HepG2 (cell line): ENCODE measurements at regions of chr19 and their contacts with region 1.

Region 1: DNA sequence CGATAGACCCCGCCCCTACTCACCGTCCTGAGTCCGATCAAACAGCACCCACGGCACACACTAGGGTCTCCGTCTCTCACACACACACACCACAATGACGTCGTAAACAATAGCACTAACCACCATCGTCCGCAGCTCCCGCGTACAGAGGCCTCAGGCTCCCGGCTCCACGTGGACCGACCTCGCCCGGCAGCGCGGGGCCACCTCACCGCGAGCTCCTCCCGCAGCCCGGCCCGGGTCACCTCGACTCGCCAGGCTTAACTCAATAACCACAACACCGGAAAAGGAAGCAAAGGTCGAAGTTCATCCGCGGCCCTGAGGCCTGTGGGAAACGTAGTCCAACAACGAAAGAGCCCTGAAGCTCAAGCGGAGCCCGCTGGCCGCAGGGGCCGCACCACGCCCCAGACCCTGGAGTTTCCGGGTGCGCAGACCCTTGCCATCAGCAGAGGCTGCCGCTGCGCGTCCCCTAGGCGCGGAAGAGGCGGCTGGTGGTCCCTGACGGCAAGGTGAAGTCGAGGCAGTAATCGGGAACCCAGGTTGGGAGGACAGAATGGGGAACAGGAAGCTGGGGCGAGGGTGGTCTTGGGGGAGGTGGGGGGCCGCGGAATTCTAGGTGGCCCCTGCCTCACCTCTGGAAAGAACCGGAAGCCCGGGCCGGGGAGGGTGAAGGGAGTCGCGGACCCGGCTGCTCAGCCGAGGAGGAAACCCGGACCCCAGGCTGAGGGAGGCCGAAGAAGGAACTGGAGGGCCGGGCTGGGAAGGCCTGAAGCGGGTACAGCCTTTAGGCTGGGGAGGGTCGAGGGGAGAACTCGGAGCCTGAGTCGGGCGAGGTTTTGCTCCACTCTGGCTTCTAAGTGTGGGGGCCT is at the start of gene ZNF529:
- DNase-seq: peak; percentile 95
- ATAC-seq: peak; percentile 96
- H3K4me3 ChIP-seq: peak within 1 kb of the TSS; percentile 67 to 91 (median 77)
- H3K27ac ChIP-seq: peak within 1 kb of the TSS; percentile 78
- H3K4me1 ChIP-seq: peaks cover 20% of the 10 kb centered on the region
- H3K27me3 ChIP-seq: no peaks in the 10 kb centered on the region; a peak in 1 of 5 replicates
- CTCF ChIP-seq: 0 out of 2 replicates have a peak, but pooled peaks have one; percentile 17
- EP300 ChIP-seq: no peak
- POLR2A ChIP-seq: peak; percentile 89 to 93
- RAD21 ChIP-seq: peak; percentile 50
- total RNA-seq, gene ZNF529: 9.3 and 14.2 TPM in 2 replicates

Region 2: GRCh38 chr19:36528194-36528920 is 44.9 kb before region 1 on chr19 and contains the start of gene ZNF260:
- CTCF ChIA-PET with region 1: no interaction called
- POLR2A ChIA-PET with region 1: interaction called, 41 read pairs
- in situ Hi-C with region 1: no loop called
- intact Hi-C with region 1: loop called (anchors 1 kb)
- DNase-seq: peak; percentile 95
- ATAC-seq: peak; percentile 96
- H3K4me3 ChIP-seq: peak within 1 kb of the TSS; percentile 73 to 93 (median 85)
- H3K27ac ChIP-seq: peak within 1 kb of the TSS; percentile 86
- H3K4me1 ChIP-seq: peaks cover 18% of the 10 kb centered on the region
- H3K27me3 ChIP-seq: no peaks in the 10 kb centered on the region; a peak in 1 of 5 replicates
- CTCF ChIP-seq: 0 out of 2 replicates have a peak, but pooled peaks have one; percentile 3
- EP300 ChIP-seq: no peak
- POLR2A ChIP-seq: peak; percentile 77 to 90
- RAD21 ChIP-seq: peak; percentile 25; the same call in 1 of the 2 replicates
- total RNA-seq, gene ZNF260: 10.5 and 19.9 TPM in 2 replicates

Region 3: GRCh38 chr19:36646746-36647145 is 73.5 kb after region 1 on chr19:
- CTCF ChIA-PET with region 1: no interaction called
- POLR2A ChIA-PET with region 1: no interaction called
- in situ Hi-C with region 1: no loop called
- intact Hi-C with region 1: no loop called
- DNase-seq: no peak
- ATAC-seq: no peak
- H3K4me3 ChIP-seq: no peak overlapping the region
- H3K27ac ChIP-seq: no peak overlapping the region
- H3K4me1 ChIP-seq: no peaks in the 10 kb centered on the region
- H3K27me3 ChIP-seq: no peaks in the 10 kb centered on the region
- CTCF ChIP-seq: no peak
- EP300 ChIP-seq: no peak
- POLR2A ChIP-seq: no peak
- RAD21 ChIP-seq: no peak

Region 4: DNA sequence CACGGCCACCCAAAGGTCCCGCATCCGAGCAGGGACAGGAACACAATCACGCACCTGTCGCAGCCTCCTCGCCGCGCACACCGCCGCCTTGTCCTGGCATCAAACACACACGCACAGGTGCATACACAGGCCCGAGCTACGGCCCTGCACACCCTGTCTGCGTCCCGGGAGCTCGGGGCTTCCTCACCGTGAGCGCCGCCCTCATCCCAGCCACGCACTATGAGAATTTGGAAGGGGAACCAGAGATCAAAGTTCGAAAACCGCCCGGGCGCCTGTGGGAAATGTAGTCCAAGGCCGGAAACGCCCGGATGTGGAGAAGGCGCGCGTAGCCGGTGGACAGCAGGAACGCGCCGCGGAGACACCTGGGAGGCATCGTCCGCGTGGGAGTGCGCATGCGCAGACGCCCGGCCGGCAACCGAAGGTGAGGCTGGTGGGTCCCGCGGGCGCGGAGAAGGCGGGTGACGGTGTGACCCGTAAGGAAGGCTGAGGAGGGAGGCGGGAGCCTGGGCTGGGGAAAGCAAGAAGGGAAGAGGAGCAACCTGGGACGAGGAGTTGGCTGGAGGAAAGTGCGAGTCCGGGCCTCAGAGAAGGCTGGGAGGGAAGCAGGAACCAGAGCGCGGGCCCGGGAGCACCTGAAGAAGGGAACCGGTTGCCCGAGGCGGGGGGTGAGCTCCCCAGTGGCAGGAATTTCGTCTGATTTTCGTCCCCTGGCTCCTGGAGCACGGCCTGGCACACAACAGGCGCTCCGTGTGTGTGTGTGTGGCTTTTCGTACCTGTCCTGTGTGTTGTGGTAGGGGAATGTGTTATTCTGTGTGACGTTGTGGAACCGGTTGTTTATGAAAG is 114.2 kb after region 1 on chr19 and contains the start of gene ZNF567:
- CTCF ChIA-PET with region 1: no interaction called
- POLR2A ChIA-PET with region 1: no interaction called
- in situ Hi-C with region 1: no loop called
- intact Hi-C with region 1: loop called (anchors 5 kb)
- DNase-seq: peak; percentile 95
- ATAC-seq: peak; percentile 96
- H3K4me3 ChIP-seq: peak within 1 kb of the TSS; percentile 70 to 88 (median 86)
- H3K27ac ChIP-seq: peak within 1 kb of the TSS; percentile 62
- H3K4me1 ChIP-seq: peaks cover 16% of the 10 kb centered on the region
- H3K27me3 ChIP-seq: peaks cover 0 to 3% of the 10 kb centered on the region in 2 experiments; a peak in 2 of 5 replicates
- CTCF ChIP-seq: 0 out of 2 replicates have a peak, but pooled peaks have one; percentile 3
- EP300 ChIP-seq: peak; percentile 41 to 42; a peak in 1 of 4 replicates
- POLR2A ChIP-seq: peak; percentile 75 to 84
- RAD21 ChIP-seq: no peak
- total RNA-seq, gene ZNF567: 6.8 and 9.3 TPM in 2 replicates

Region 5: DNA sequence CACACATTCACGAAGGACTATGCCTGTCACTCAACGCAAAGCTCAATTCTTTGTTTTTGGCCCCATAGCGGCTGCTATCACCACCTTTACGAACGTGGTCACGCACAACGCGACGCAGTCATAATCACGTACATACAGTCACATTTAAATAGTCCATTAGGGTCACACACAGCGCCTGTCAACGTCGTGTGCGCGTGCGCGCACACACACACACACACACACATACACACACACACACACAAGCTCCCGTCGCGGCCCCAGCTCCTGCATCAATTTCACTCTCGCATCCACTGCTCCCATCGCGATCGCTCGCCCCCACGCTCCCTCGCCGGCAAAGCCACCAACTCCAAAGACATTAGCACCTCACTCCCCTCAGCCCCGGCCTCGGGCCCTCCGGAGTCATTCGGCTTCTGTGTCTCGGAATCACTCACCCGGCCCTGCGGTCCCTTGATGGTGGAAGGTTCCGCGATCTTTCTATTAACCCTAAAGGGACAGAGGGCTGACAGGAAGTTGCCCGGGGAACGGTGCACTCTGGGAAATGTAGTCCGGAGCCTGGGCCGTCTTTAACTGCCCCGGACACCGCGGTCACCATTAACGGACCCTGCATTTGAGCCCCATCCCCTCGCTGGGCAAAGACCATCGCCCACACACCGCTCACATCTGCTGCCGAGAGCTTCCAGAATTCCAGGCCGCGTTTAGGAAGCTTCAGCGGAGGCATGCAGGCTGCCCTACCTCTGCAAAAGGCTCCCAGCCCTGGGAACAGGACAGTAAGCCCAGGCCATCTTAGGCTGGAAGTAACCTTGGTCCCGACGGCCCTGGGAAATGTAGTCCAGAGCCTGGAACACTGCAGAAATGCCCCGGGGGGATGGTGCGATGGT is 264.9 kb after region 1 on chr19 and contains the start of gene ZNF790:
- CTCF ChIA-PET with region 1: no interaction called
- POLR2A ChIA-PET with region 1: interaction called, 6 read pairs
- in situ Hi-C with region 1: no loop called
- intact Hi-C with region 1: loop called (anchors 5 kb)
- DNase-seq: peak; percentile 89
- ATAC-seq: peak; percentile 96
- H3K4me3 ChIP-seq: peak within 1 kb of the TSS; percentile 77 to 85 (median 84)
- H3K27ac ChIP-seq: peak within 1 kb of the TSS; percentile 86
- H3K4me1 ChIP-seq: peaks cover 19% of the 10 kb centered on the region
- H3K27me3 ChIP-seq: no peaks in the 10 kb centered on the region; a peak in 1 of 5 replicates
- CTCF ChIP-seq: no peak
- EP300 ChIP-seq: 0 out of 4 replicates have a peak, but pooled peaks of 1 of the 2 experiments have one; percentile 16
- POLR2A ChIP-seq: peak; percentile 61 to 78; a peak in 3 of 4 replicates
- RAD21 ChIP-seq: 0 out of 2 replicates have a peak, but pooled peaks have one; percentile 23
- total RNA-seq, gene ZNF790: 5.3 and 8.5 TPM in 2 replicates